ENCODE measurements at regions of chr9 and their contacts with region 1.

Region 1: GRCh38 chr9:36873247-36873875 is 160.7 kb downstream of the PAX5 start:
- DNase-seq: peak; percentile 52
- ATAC-seq: peak; percentile 77
- H3K4me3 Mint-ChIP-seq: no peak overlapping the region
- H3K27ac Mint-ChIP-seq: peak overlapping the region; percentile 87
- H3K4me1 Mint-ChIP-seq: peaks cover 63% of the 10 kb centered on the region
- H3K27me3 Mint-ChIP-seq: no peaks in the 10 kb centered on the region
- CTCF ChIP-seq: no peak

Region 2: DNA sequence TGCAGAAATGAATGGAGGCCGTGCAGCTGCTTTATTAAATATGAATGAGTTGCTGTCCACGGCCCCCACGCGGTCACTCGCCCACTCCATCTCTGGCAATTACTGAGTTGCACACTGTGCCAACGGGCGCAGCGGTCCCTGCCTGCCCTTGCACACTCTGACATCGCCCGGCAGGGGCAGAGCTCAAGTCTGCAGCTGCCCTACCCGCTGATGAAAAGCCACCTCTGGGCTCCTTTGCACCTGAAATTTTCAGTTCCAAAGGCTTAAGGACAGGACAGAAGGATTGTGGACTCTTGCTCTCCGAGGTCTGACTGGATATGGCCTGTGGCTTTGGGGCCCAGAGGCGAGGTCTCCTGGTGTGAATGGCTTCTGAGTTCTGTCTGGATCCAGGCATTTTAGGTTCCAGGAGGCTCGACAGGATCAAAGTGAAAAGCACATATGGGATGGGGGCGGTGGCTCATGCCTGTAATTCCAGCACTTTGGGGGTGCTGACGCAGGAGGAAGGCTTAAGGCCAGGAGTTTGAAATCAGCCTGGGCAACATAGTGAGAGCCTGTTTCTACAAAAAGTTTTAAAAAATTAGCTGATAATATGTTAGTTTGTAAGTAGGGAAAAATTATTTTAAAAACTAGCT is 41.1 kb before region 1 on chr9:
- CTCF ChIA-PET with region 1: no interaction called
- POLR2A ChIA-PET with region 1: no interaction called
- intact Hi-C with region 1: no loop called
- DNase-seq: peak; percentile 12
- ATAC-seq: no peak
- H3K4me3 Mint-ChIP-seq: no peak overlapping the region
- H3K27ac Mint-ChIP-seq: peak overlapping the region; percentile 57
- H3K4me1 Mint-ChIP-seq: peaks cover 69% of the 10 kb centered on the region
- H3K27me3 Mint-ChIP-seq: no peaks in the 10 kb centered on the region
- CTCF ChIP-seq: no peak

Region 3: GRCh38 chr9:36913393-36914211 is 40.2 kb after region 1 on chr9:
- CTCF ChIA-PET with region 1: no interaction called
- POLR2A ChIA-PET with region 1: no interaction called
- intact Hi-C with region 1: no loop called
- DNase-seq: no peak
- ATAC-seq: peak; percentile 10
- H3K4me3 Mint-ChIP-seq: no peak overlapping the region
- H3K27ac Mint-ChIP-seq: peak overlapping the region; percentile 35
- H3K4me1 Mint-ChIP-seq: peaks cover 27% of the 10 kb centered on the region
- H3K27me3 Mint-ChIP-seq: no peaks in the 10 kb centered on the region
- CTCF ChIP-seq: no peak

Region 4: GRCh38 chr9:36987891-36988290 is 114.5 kb after region 1 on chr9:
- CTCF ChIA-PET with region 1: interaction called, 16 read pairs
- POLR2A ChIA-PET with region 1: interaction called, 6 read pairs
- intact Hi-C with region 1: loop called (anchors 1 kb)
- DNase-seq: no peak
- ATAC-seq: no peak
- H3K4me3 Mint-ChIP-seq: peak overlapping the region; percentile 71
- H3K27ac Mint-ChIP-seq: peak overlapping the region; percentile 82
- H3K4me1 Mint-ChIP-seq: peaks cover 90% of the 10 kb centered on the region
- H3K27me3 Mint-ChIP-seq: no peaks in the 10 kb centered on the region
- CTCF ChIP-seq: no peak

Region 5: GRCh38 chr9:37309136-37309535 is 435.8 kb after region 1 on chr9:
- CTCF ChIA-PET with region 1: interaction called, 6 read pairs
- POLR2A ChIA-PET with region 1: interaction called, 3 read pairs
- intact Hi-C with region 1: loop called (anchors 2 kb)
- DNase-seq: no peak
- ATAC-seq: peak; percentile 87
- H3K4me3 Mint-ChIP-seq: no peak overlapping the region
- H3K27ac Mint-ChIP-seq: peak overlapping the region; percentile 84
- H3K4me1 Mint-ChIP-seq: peaks cover 43% of the 10 kb centered on the region
- H3K27me3 Mint-ChIP-seq: no peaks in the 10 kb centered on the region
- CTCF ChIP-seq: no peak

Measured in activated B cell treated with CpG ODN at 0.5 μM for 24 hours (primary cell).